ENCODE measurements at regions of chr17 and their contacts with region 1.

Region 1: GRCh38 chr17:2672026-2672425 is 39.5 kb downstream of the CLUH start:
- DNase-seq: no peak
- H3K4me3 ChIP-seq: no peak overlapping the region
- H3K27ac ChIP-seq: no peak overlapping the region
- H3K4me1 ChIP-seq: no peaks in the 10 kb centered on the region
- H3K27me3 ChIP-seq: no peaks in the 10 kb centered on the region
- CTCF ChIP-seq: no peak
- POLR2A ChIP-seq: no peak

Region 2: DNA sequence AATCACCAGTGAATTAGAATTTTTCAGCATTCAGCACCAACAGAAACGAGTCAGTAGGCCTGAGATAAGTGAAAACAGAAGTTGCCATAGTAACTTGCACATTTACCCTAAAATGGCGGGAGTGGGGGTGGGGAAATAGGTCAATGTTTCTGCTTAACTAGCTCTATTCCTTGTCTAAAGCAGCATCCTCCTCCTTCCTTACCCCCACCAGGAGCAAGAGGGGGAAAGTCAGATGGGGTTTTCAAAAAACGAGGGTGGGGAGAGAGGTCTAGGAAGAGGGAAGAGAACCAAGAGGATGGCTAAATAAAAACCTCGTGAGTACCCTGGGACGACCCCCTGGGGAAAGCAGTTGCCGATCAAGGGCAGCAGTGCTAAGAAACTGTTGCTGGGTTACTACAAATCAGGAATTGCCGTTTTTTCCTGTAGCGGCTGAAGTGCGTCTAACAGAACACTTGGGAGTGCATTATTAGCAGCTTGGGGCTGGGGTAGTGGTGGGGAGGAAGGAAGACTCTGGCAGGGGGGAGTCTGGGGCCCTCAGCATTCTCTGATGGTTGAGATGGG is 236.8 kb before region 1 on chr17:
- intact Hi-C with region 1: loop called (anchors 10 kb)
- DNase-seq: no peak
- H3K4me3 ChIP-seq: no peak overlapping the region
- H3K27ac ChIP-seq: no peak overlapping the region
- H3K4me1 ChIP-seq: no peaks in the 10 kb centered on the region
- H3K27me3 ChIP-seq: no peaks in the 10 kb centered on the region
- CTCF ChIP-seq: no peak
- POLR2A ChIP-seq: no peak

Measured in esophagus squamous epithelium (tissue), 5 donors.